ENCODE measurements at regions of chr19 and their contacts with region 1.

Region 1: GRCh38 chr19:48110350-48110966 is at the start of gene PLA2G4C:
- DNase-seq: peak; percentile 93 to 97 (median 94)
- ATAC-seq: peak; percentile 95 to 96 (median 96)
- H3K4me3 ChIP-seq: peak within 1 kb of the TSS; percentile 36 to 68 (median 58)
- H3K27ac ChIP-seq: peak within 1 kb of the TSS; percentile 87 to 100 (median 96)
- H3K4me1 ChIP-seq: peaks cover 0 to 42% (median 21%) of the 10 kb centered on the region in 12 donors
- H3K27me3 ChIP-seq: no peaks in the 10 kb centered on the region
- CTCF ChIP-seq: no peak
- POLR2A ChIP-seq: peak in 1 of 2 donors; percentile 70
- total RNA-seq, gene PLA2G4C: 16.6 to 71.5 (median 41.6) TPM

Region 2: GRCh38 chr19:48152551-48152950 is 42.1 kb after region 1 on chr19:
- intact Hi-C with region 1: loop called (anchors 1 to 2 kb)
- DNase-seq: peak in 4 of 5 donors; percentile 44 to 61 (median 46)
- ATAC-seq: peak in 3 of 4 donors; percentile 49 to 60 (median 55)
- H3K4me3 ChIP-seq: no peak overlapping the region
- H3K27ac ChIP-seq: peak overlapping the region in 2 of 12 donors; percentile 28 to 40
- H3K4me1 ChIP-seq: no peaks in the 10 kb centered on the region
- H3K27me3 ChIP-seq: no peaks in the 10 kb centered on the region
- CTCF ChIP-seq: peak; percentile 78 to 91 (median 86)
- POLR2A ChIP-seq: no peak

Region 3: GRCh38 chr19:48182434-48182833 is 72.0 kb after region 1 on chr19:
- intact Hi-C with region 1: no loop called
- DNase-seq: peak in 1 of 5 donors; percentile 59
- ATAC-seq: no peak
- H3K4me3 ChIP-seq: no peak overlapping the region
- H3K27ac ChIP-seq: no peak overlapping the region
- H3K4me1 ChIP-seq: no peaks in the 10 kb centered on the region
- H3K27me3 ChIP-seq: no peaks in the 10 kb centered on the region
- CTCF ChIP-seq: no peak
- POLR2A ChIP-seq: no peak

Measured in heart left ventricle (tissue), 16 donors.